SK-N-SH (cell line): ENCODE measurements at regions of chr11 and their contacts with region 1.

Region 1: DNA sequence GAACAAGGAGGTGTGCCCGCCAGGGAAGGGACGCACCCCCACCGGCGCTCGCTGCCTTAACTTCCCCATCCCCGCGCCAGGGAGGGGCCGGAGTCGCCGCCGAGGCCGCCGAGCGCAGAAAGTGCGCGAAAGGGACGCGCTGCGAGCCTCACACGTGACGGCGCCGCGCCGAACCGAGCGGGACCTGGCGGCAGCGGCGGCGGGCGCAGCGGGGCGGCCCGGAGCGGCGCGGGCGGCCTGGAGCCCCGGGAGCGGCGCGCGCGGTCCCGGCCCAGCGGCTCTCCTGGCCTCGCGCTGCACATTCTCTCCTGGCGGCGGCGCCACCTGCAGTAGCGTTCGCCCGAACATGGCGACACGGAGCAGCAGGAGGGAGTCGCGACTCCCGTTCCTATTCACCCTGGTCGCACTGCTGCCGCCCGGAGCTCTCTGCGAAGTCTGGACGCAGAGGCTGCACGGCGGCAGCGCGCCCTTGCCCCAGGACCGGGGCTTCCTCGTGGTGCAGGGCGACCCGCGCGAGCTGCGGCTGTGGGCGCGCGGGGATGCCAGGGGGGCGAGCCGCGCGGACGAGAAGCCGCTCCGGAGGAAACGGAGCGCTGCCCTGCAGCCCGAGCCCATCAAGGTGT is at the start of gene SORL1:
- DNase-seq: peak; percentile 93
- H3K4me3 ChIP-seq: peak within 1 kb of the TSS; percentile 71 to 86
- H3K27ac ChIP-seq: peak within 1 kb of the TSS in 1 of 2 experiments; percentile 62; a peak in 1 of 4 replicates
- H3K4me1 ChIP-seq: peaks cover 0 to 11% of the 10 kb centered on the region in 2 experiments; a peak in 2 of 4 replicates
- H3K27me3 ChIP-seq: peaks cover 44% of the 10 kb centered on the region
- CTCF ChIP-seq: peak; percentile 57
- EP300 ChIP-seq: no peak
- RAD21 ChIP-seq: peak; percentile 58
- polyA plus RNA-seq, gene SORL1: 6.1 and 7.1 TPM in 2 replicates

Region 2: GRCh38 chr11:120645639-120646038 is 806.5 kb before region 1 on chr11:
- CTCF ChIA-PET with region 1: no interaction called
- POLR2A ChIA-PET with region 1: no interaction called
- DNase-seq: no peak
- H3K4me3 ChIP-seq: no peak overlapping the region
- H3K27ac ChIP-seq: no peak overlapping the region
- H3K4me1 ChIP-seq: peaks cover 0 to 10% of the 10 kb centered on the region in 2 experiments; a peak in 1 of 4 replicates
- H3K27me3 ChIP-seq: no peaks in the 10 kb centered on the region
- CTCF ChIP-seq: no peak
- EP300 ChIP-seq: no peak
- RAD21 ChIP-seq: no peak

Region 3: GRCh38 chr11:121464352-121464946 is 12.4 kb after region 1 on chr11:
- CTCF ChIA-PET with region 1: interaction called, 29 read pairs
- POLR2A ChIA-PET with region 1: no interaction called
- DNase-seq: peak; percentile 78
- H3K4me3 ChIP-seq: no peak overlapping the region
- H3K27ac ChIP-seq: peak overlapping the region; percentile 34 to 74
- H3K4me1 ChIP-seq: peaks cover 35 to 36% of the 10 kb centered on the region in 2 experiments
- H3K27me3 ChIP-seq: no peaks in the 10 kb centered on the region
- CTCF ChIP-seq: no peak
- EP300 ChIP-seq: peak; percentile 76 to 92
- RAD21 ChIP-seq: no peak; the same call in 1 of the 2 replicates

Region 4: GRCh38 chr11:121575250-121575962 is 123.3 kb after region 1 on chr11:
- CTCF ChIA-PET with region 1: interaction called, 15 read pairs
- POLR2A ChIA-PET with region 1: no interaction called
- DNase-seq: no peak
- H3K4me3 ChIP-seq: no peak overlapping the region
- H3K27ac ChIP-seq: no peak overlapping the region
- H3K4me1 ChIP-seq: peaks cover 0 to 8% of the 10 kb centered on the region in 2 experiments; a peak in 1 of 4 replicates
- H3K27me3 ChIP-seq: no peaks in the 10 kb centered on the region
- CTCF ChIP-seq: no peak
- EP300 ChIP-seq: no peak
- RAD21 ChIP-seq: no peak